ENCODE measurements at regions of chr4 and their contacts with region 1.

Region 1: GRCh38 chr4:80926446-80926845 is 104.1 kb upstream of the BMP3 start:
- DNase-seq: no peak
- H3K4me3 ChIP-seq: no peak overlapping the region
- H3K27ac ChIP-seq: peak overlapping the region; percentile 84
- H3K4me1 ChIP-seq: peaks cover 36% of the 10 kb centered on the region
- CTCF ChIP-seq: no peak

Region 2: GRCh38 chr4:80610845-80611677 is 315.4 kb before region 1 on chr4:
- CTCF ChIA-PET with region 1: no interaction called
- POLR2A ChIA-PET with region 1: interaction called, 7 read pairs
- intact Hi-C with region 1: loop called (anchors 1 kb)
- DNase-seq: peak; percentile 99
- H3K4me3 ChIP-seq: peak overlapping the region; percentile 40
- H3K27ac ChIP-seq: peak overlapping the region; percentile 99
- H3K4me1 ChIP-seq: peaks cover 69% of the 10 kb centered on the region
- CTCF ChIP-seq: no peak

Region 3: DNA sequence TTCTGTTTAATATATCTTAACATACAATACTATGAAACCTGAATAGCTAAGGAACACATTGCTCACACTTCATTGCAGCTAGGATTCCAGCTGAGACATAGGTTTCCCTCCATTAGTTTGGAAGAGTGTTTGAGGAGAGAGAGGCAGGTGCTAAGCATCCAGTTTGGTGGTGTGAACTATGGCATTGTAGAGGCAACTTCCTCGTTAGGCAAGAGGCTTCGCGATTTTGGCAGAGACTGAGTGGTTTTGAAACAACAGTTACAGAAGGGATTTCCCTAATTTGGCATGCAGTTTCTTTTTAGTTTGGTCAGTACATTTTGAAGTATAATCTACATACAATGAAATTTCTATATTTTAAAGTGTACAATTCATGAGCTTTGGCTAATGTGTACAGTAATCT is 13.1 kb before region 1 on chr4:
- CTCF ChIA-PET with region 1: no interaction called
- POLR2A ChIA-PET with region 1: interaction called, 19 read pairs
- intact Hi-C with region 1: no loop called
- DNase-seq: peak; percentile 26
- H3K4me3 ChIP-seq: no peak overlapping the region
- H3K27ac ChIP-seq: no peak overlapping the region
- H3K4me1 ChIP-seq: peaks cover 7% of the 10 kb centered on the region
- CTCF ChIP-seq: no peak

Region 4: DNA sequence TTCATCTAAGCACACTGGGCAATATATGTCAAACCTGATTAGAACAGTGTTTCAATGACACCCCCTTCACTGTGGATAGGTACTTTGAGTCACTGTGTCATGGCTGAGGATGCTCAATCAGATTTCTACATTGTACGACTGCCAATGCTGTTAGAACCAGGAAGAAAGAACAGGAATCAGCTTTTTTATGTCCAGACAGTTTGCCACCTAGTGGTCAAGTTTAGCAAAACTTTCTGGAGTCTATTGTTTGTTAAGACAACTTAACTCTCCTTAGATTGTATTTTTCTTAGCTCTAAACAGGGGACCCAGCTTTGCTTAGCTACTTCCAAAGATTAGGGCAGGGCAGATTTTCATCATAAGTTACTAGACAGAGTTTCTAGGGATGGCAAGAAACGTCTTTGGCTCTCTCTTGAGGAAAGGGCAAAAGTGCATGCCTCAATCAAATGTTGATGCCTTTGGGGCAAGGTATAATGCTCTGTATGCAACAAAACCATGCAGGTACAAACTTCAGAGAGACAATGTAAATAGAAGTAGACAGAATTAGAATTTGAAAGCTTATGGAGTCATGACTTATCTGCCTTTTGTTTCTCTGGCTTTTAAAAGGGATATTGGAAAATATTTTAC is 63.6 kb after region 1 on chr4:
- CTCF ChIA-PET with region 1: no interaction called
- POLR2A ChIA-PET with region 1: interaction called, 6 read pairs
- intact Hi-C with region 1: loop called (anchors 1 kb)
- DNase-seq: peak; percentile 87
- H3K4me3 ChIP-seq: peak overlapping the region; percentile 5
- H3K27ac ChIP-seq: peak overlapping the region; percentile 97
- H3K4me1 ChIP-seq: peaks cover 45% of the 10 kb centered on the region
- CTCF ChIP-seq: peak; percentile 93

Region 5: GRCh38 chr4:81040012-81040659 is 113.7 kb after region 1 on chr4:
- CTCF ChIA-PET with region 1: no interaction called
- POLR2A ChIA-PET with region 1: interaction called, 41 read pairs
- intact Hi-C with region 1: no loop called
- DNase-seq: peak; percentile 82
- H3K4me3 ChIP-seq: peak overlapping the region; percentile 52
- H3K27ac ChIP-seq: peak overlapping the region; percentile 92
- H3K4me1 ChIP-seq: peaks cover 72% of the 10 kb centered on the region
- CTCF ChIP-seq: peak; percentile 96

Region 6: GRCh38 chr4:81106150-81106549 is 179.7 kb after region 1 on chr4:
- CTCF ChIA-PET with region 1: no interaction called
- POLR2A ChIA-PET with region 1: no interaction called
- intact Hi-C with region 1: no loop called
- DNase-seq: no peak
- H3K4me3 ChIP-seq: no peak overlapping the region
- H3K27ac ChIP-seq: no peak overlapping the region
- H3K4me1 ChIP-seq: no peaks in the 10 kb centered on the region
- CTCF ChIP-seq: no peak

Measured in OCI-LY7 (cell line).